ENCODE measurements at regions of chr2 and their contacts with region 1.

Region 1: DNA sequence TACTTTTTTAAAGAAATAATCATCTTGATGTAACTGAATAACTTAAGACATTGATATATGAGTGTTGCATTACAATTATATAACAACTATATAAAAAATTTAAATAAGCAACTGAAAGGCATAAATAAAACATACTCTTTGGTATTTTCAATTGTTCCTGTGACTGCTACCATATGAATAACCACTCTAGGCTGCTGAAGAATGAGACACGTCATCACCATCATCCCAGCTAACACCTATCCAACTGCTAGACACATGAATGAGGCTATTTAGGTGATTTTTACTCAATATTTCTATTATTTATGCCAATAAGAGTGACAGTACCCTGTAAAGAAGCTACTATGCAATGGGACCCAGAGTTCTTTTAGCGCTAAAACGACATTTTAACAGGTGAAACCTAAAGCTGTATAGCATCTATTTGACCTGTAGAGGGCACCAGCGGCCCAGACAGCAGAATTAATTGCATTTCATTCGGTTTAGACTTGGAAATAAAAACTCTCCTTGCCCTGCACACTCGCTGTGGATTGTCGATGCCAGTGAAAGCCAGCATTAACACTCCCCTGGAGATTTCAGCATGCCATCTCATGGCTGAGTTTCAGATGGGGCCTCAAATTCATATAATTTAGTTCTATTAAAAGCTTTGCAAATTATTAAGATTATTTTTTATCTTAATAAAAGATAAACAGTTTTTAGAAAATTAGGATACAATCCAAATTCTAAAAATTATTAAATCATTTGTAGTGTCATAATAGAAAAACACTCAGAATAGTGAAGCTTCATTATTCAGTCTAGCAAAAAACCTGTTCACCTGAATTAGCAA is 89.4 kb upstream of the MAP2 start:
- DNase-seq: peak; percentile 18 to 57
- ATAC-seq: peak in 5 of 8 donors; percentile 22 to 61 (median 52)
- H3K4me3 ChIP-seq: no peak overlapping the region
- H3K27ac ChIP-seq: no peak overlapping the region
- H3K4me1 ChIP-seq: peaks cover 0 to 5% (median 0%) of the 10 kb centered on the region in 9 donors
- H3K27me3 ChIP-seq: peaks cover 0 to 4% (median 0%) of the 10 kb centered on the region in 7 donors
- CTCF ChIP-seq: peak; percentile 87 to 97 (median 90)

Region 2: GRCh38 chr2:208686662-208687061 is 647.7 kb before region 1 on chr2:
- intact Hi-C with region 1: no loop called
- DNase-seq: no peak
- ATAC-seq: no peak
- H3K4me3 ChIP-seq: no peak overlapping the region
- H3K27ac ChIP-seq: no peak overlapping the region
- H3K4me1 ChIP-seq: no peaks in the 10 kb centered on the region
- H3K27me3 ChIP-seq: no peaks in the 10 kb centered on the region
- CTCF ChIP-seq: no peak

Region 3: DNA sequence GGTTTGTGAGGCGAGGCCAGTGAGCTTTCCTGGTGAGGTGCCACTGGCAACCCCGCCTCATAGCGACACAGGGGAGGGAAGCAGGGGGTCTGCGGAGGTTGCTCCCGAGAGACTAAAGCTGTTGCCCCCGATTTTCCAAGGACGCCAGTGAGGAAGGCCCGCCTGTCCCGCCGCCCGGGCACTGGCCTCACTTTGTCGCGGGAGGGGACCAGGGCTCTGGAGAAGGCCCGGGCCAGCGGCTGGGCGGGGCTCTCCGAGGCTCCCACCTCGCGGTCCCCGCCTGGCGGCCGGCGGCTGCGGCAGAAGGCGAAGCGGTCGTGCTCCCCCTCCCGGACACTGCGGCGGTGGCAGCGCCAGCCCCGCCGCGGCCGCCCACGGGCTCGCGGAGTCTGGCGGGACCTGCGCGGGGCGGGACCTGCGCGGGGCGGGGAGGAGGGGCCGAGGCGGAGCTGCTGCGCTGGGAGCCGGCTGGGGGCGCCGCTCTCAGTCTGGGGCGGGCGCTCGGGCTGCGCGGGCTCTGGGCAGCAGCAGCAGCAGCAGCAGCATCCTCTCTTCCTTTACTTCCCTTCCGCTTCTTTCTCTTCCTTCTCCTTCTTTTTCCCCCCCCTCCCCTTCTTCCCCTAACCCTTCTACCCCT is 89.3 kb after region 1 on chr2 and contains the start of gene MAP2:
- intact Hi-C with region 1: loop called in 9 of 10 experiments (anchors 1 to 5 kb)
- DNase-seq: peak; percentile 84 to 89
- ATAC-seq: peak; percentile 95 to 100 (median 98)
- H3K4me3 ChIP-seq: peak within 1 kb of the TSS; percentile 53 to 87 (median 70)
- H3K27ac ChIP-seq: peak within 1 kb of the TSS in 7 of 10 donors; percentile 11 to 71 (median 48)
- H3K4me1 ChIP-seq: peaks cover 0 to 34% (median 15%) of the 10 kb centered on the region in 9 donors
- H3K27me3 ChIP-seq: peaks cover 0 to 28% (median 0%) of the 10 kb centered on the region in 7 donors
- CTCF ChIP-seq: peak; percentile 71 to 100 (median 96)
- total RNA-seq, gene MAP2: 4.5 to 15.5 (median 5.9) TPM

Region 4: DNA sequence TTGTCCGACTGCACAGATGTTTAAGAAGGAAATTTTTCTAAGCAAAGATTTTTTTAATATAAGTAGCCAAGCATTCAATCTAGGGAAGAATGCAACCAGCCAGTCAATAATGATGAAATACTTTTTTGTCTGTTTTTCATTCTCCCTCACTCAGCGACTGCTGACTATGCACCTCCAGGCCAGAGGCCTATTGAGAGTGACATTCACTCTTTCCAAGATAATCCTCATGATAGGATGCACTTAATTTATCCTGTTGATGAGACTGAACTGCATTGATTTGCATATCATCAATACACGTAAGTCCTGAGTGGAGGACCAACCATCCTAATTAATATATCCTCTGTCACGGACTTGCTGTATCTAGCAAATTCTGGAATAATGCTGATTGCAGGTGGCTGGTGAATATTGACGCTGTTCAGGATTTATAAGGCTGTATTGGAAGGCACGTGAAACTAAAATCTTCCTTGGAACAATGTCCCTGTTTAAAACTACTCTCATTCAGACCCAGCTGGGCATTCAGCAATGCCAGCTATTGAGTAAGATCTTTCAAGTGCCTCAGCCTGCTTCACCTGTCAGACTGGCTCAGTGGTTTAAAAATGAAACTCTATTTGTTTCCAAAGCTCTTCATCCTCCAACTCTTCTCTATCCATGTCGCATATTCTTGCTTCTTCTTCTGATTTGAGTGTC is 231.6 kb after region 1 on chr2:
- intact Hi-C with region 1: loop called in 1 of 10 experiments (anchors 5 kb)
- DNase-seq: no peak
- ATAC-seq: no peak
- H3K4me3 ChIP-seq: no peak overlapping the region
- H3K27ac ChIP-seq: no peak overlapping the region
- H3K4me1 ChIP-seq: no peaks in the 10 kb centered on the region
- H3K27me3 ChIP-seq: no peaks in the 10 kb centered on the region
- CTCF ChIP-seq: no peak

Region 5: DNA sequence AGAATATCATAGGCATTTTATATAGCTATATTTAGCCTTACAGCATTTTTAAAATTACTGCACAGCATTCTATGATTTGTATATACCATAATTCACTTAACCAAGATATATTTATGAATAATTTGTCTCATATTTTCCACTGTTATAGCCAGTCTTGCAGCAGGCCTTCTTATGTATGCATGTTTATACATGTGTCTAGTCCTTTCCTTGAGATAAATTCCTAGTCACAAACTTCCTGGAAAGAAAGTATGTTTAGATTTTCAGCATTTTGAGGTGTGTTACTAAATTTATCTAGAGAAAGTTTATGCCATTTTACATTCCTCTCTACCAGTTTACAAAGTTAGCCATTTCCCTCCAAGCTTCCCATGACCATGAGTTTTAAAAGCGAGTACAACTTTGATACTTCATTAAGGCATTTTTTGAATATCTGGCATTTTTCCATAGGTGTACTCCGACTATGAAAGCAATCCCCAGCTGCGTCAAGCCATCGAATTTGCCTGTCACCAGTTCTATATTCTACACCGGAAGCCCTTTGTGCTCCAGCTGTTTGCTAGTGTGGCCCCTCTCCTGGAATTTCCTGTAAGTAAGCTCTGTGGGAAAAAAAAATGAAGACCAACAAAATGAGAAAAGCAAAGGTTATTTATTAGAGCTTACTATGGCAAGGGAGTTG is 608.7 kb after region 1 on chr2:
- intact Hi-C with region 1: loop called in 1 of 10 experiments (anchors 10 kb)
- DNase-seq: no peak
- ATAC-seq: no peak
- H3K4me3 ChIP-seq: no peak overlapping the region
- H3K27ac ChIP-seq: no peak overlapping the region
- H3K4me1 ChIP-seq: no peaks in the 10 kb centered on the region
- H3K27me3 ChIP-seq: no peaks in the 10 kb centered on the region
- CTCF ChIP-seq: no peak

Region 6: GRCh38 chr2:210195101-210195852 is 860.9 kb after region 1 on chr2:
- intact Hi-C with region 1: loop called in 3 of 10 experiments (anchors 10 kb)
- DNase-seq: peak in 1 of 2 donors; percentile 19
- ATAC-seq: peak in 4 of 8 donors; percentile 43 to 68 (median 58)
- H3K4me3 ChIP-seq: peak overlapping the region in 8 of 10 donors; percentile 1 to 44 (median 36)
- H3K27ac ChIP-seq: no peak overlapping the region
- H3K4me1 ChIP-seq: peaks cover 0 to 11% (median 0%) of the 10 kb centered on the region in 9 donors
- H3K27me3 ChIP-seq: no peaks in the 10 kb centered on the region
- CTCF ChIP-seq: peak; percentile 52 to 88 (median 73)